Tibial artery (tissue), 4 donors: ENCODE measurements at regions of chr19 and their contacts with region 1.

Region 1: DNA sequence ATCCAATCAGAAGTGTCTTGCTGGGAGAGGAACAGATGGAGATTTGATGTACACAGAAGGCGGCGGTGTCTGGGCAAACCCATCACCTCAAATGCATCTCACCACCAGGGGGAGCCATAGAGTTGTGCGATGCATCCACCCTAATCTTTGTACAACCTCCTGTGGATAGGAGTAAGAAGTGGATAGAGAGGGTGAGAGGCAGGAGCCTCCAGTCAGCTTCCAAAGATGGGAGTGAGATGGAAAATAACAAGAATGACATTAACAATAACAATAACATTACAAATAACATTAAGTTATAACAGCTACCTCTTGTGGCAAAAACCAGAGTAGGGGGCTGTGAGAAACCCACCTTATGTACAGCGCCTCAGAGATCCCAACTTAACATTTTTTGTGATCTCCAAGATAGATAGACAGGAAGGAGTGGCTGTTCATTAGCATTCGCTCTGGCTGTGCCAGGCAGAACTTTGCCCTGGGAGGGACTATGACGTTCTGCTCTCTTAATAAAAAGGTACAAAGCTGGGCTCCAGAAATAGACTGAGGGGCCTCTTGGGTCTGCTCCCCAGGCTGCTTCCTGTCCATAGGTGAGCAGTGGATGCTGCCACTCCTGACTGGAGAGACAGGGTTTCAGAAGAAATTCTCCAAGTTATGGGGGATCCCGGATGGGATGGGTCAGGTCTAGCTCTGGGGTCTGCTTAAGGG is 5.2 kb upstream of the CEACAM18 start:
- DNase-seq: peak; percentile 80 to 81
- H3K4me3 ChIP-seq: no peak overlapping the region
- H3K27ac ChIP-seq: no peak overlapping the region
- H3K4me1 ChIP-seq: no peaks in the 10 kb centered on the region
- H3K27me3 ChIP-seq: peaks cover 0 to 30% of the 10 kb centered on the region in 2 donors
- CTCF ChIP-seq: peak; percentile 73 to 80

Region 2: DNA sequence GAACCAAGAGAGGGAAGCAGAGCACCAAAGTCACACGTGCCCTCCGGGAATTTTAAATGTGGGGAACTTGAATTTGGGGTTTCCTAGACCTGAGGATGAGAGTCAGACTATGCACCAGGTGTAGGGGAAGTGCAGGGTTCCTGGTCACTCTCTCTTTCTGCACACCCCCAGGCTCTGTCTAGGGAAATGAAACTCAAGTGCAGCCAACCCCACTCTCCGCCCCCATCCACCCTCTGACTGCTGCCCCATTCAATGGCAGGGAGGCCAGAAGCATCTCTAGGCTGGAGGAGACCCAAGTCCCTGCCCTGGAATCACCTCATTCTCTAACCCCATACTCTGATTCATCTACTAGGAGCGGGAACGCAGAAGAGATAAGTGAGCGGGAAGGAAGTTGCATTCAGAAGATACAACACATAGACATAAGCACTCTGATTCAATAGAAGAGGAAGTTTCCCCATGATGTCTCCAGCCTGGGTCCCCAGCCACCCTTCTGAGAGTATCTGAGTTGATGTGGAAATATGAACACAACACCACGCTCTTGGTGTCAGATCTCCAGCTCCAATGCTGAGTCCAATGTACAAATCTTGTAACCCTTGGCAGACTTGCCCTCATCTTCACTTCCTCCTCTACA is 178.2 kb after region 1 on chr19:
- intact Hi-C with region 1: loop called (anchors 10 kb)
- DNase-seq: peak in 1 of 2 donors; percentile 33
- H3K4me3 ChIP-seq: no peak overlapping the region
- H3K27ac ChIP-seq: no peak overlapping the region
- H3K4me1 ChIP-seq: no peaks in the 10 kb centered on the region
- H3K27me3 ChIP-seq: peaks cover 0 to 3% of the 10 kb centered on the region in 2 donors
- CTCF ChIP-seq: no peak

Region 3: DNA sequence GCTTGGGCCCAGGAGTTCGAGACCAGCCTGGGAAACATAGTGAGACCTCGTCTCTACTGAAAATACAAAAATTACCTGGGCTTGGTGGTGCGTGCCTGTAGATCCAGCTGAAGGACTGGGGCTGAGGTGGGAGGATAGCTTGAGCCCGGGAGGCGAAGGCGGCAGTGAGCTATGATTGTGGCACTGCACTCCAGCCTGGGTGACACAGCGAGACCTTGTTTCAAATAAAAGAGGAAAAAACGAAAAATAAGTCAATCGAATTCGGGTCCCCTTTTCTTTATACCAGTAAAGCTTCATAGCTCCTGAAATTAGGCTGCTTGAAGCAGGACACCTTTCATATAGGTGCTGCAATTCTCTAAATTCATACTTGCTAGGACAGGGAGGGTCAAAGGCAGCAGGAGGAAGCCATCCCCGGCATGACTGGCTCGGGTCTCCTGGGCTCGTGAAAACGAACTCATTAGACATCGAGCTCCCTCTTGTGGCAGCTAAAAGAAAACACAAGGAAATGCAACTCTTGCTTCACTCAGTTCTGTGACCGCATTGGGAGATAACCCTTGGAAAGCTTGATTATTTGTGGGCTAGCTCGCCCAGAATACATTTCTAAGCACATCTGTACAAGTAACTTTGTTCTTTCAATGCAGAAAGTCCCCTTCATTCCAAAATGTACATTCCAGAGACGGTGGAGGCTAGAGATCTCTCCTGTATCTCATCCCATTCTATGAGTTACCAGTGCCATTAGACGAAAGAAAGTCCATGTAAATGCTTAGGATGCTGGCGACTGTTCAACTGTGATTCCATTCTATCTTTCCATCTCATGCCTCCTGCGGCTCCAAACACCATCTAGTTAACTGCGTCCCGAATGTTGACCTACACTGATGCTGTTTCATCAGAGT is 304.7 kb after region 1 on chr19:
- intact Hi-C with region 1: loop called (anchors 10 kb)
- DNase-seq: peak; percentile 64 to 71
- H3K4me3 ChIP-seq: no peak overlapping the region
- H3K27ac ChIP-seq: no peak overlapping the region
- H3K4me1 ChIP-seq: peaks cover 0 to 4% (median 0%) of the 10 kb centered on the region in 4 donors
- H3K27me3 ChIP-seq: peaks cover 0 to 20% of the 10 kb centered on the region in 2 donors
- CTCF ChIP-seq: peak; percentile 64 to 67